CD4-positive, alpha-beta memory T cell (primary cell): ENCODE measurements at regions of chr6 and their contacts with region 1.

Region 1: DNA sequence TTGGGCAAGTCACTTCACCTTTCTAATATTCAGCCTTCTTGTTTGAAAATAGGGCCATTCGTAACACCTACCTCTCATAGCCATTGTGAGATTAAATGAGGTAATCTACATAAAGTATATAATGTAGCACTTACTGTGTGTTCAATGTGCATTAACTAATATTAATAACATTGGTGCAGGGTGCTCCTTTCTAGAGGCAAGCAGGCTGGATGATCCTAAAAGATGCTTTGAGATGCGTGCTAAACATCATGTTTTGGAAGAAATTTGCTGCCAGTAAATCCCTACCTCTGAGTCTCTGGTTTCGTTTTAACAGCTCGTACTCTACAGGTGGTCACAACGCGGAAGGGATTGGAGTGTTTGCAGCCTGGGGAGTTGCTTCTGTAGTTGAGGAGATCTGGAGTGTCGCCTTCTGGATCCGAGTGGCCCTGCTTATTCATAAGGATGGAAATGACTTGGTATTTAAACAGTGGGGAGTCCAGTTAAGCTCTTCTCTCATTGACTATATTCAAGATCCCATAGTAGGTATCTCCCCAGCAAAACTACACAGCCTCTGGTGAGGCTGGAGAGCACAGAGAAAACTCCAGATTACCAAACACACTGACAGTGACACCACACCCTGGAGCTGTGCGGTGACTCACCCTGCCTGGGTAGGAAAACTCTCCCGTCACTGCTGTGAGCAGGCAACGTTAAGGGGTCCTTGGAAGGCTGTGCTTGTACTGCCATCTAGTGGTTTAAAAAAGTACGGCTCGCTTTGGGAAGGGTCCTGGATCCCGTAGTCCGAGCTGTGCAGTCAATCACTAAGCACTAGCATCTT is 107.9 kb downstream of the MAP3K7 start:
- DNase-seq: peak; percentile 78 to 92 (median 82)
- H3K4me3 ChIP-seq: no peak overlapping the region
- H3K4me3 Mint-ChIP-seq: peak overlapping the region in 5 of 8 donors; percentile 29 to 78 (median 69)
- H3K27ac ChIP-seq: no peak overlapping the region
- H3K27ac Mint-ChIP-seq: peak overlapping the region; percentile 54 to 91 (median 88)
- H3K4me1 ChIP-seq: peaks cover 23% of the 10 kb centered on the region
- H3K4me1 Mint-ChIP-seq: peaks cover 12 to 41% (median 22%) of the 10 kb centered on the region in 4 donors
- H3K27me3 ChIP-seq: no peaks in the 10 kb centered on the region
- H3K27me3 Mint-ChIP-seq: no peaks in the 10 kb centered on the region

Region 2: GRCh38 chr6:89494131-89494796 is 984.7 kb before region 1 on chr6:
- CTCF ChIA-PET with region 1: no interaction called
- POLR2A ChIA-PET with region 1: no interaction called
- intact Hi-C with region 1: no loop called
- DNase-seq: no peak
- H3K4me3 ChIP-seq: no peak overlapping the region
- H3K4me3 Mint-ChIP-seq: no peak overlapping the region
- H3K27ac ChIP-seq: no peak overlapping the region
- H3K27ac Mint-ChIP-seq: no peak overlapping the region
- H3K4me1 ChIP-seq: no peaks in the 10 kb centered on the region
- H3K4me1 Mint-ChIP-seq: peaks cover 0 to 2% (median 0%) of the 10 kb centered on the region in 4 donors
- H3K27me3 ChIP-seq: no peaks in the 10 kb centered on the region
- H3K27me3 Mint-ChIP-seq: peaks cover 0 to 2% of the 10 kb centered on the region in 2 donors

Region 3: GRCh38 chr6:89940225-89941027 is 538.6 kb before region 1 on chr6:
- CTCF ChIA-PET with region 1: interaction called, 326 read pairs
- POLR2A ChIA-PET with region 1: interaction called, 19 read pairs
- intact Hi-C with region 1: loop called (anchors 1 kb)
- DNase-seq: peak; percentile 70 to 78 (median 71)
- H3K4me3 ChIP-seq: no peak overlapping the region
- H3K4me3 Mint-ChIP-seq: no peak overlapping the region
- H3K27ac ChIP-seq: no peak overlapping the region
- H3K27ac Mint-ChIP-seq: peak overlapping the region in 6 of 7 donors; percentile 5 to 67 (median 40)
- H3K4me1 ChIP-seq: peaks cover 7% of the 10 kb centered on the region
- H3K4me1 Mint-ChIP-seq: peaks cover 10 to 30% (median 17%) of the 10 kb centered on the region in 4 donors
- H3K27me3 ChIP-seq: no peaks in the 10 kb centered on the region
- H3K27me3 Mint-ChIP-seq: no peaks in the 10 kb centered on the region

Region 4: GRCh38 chr6:90080876-90081481 is 398.0 kb before region 1 on chr6:
- CTCF ChIA-PET with region 1: interaction called, 4 read pairs
- POLR2A ChIA-PET with region 1: interaction called, 3 read pairs
- intact Hi-C with region 1: loop called (anchors 2 kb)
- DNase-seq: peak; percentile 76 to 90 (median 84)
- H3K4me3 ChIP-seq: peak overlapping the region; percentile 24 to 54
- H3K4me3 Mint-ChIP-seq: peak overlapping the region; percentile 80 to 98 (median 96)
- H3K27ac ChIP-seq: peak overlapping the region; percentile 64
- H3K27ac Mint-ChIP-seq: peak overlapping the region; percentile 91 to 99 (median 98)
- H3K4me1 ChIP-seq: peaks cover 75% of the 10 kb centered on the region
- H3K4me1 Mint-ChIP-seq: peaks cover 64 to 94% (median 79%) of the 10 kb centered on the region in 4 donors
- H3K27me3 ChIP-seq: no peaks in the 10 kb centered on the region
- H3K27me3 Mint-ChIP-seq: no peaks in the 10 kb centered on the region

Region 5: DNA sequence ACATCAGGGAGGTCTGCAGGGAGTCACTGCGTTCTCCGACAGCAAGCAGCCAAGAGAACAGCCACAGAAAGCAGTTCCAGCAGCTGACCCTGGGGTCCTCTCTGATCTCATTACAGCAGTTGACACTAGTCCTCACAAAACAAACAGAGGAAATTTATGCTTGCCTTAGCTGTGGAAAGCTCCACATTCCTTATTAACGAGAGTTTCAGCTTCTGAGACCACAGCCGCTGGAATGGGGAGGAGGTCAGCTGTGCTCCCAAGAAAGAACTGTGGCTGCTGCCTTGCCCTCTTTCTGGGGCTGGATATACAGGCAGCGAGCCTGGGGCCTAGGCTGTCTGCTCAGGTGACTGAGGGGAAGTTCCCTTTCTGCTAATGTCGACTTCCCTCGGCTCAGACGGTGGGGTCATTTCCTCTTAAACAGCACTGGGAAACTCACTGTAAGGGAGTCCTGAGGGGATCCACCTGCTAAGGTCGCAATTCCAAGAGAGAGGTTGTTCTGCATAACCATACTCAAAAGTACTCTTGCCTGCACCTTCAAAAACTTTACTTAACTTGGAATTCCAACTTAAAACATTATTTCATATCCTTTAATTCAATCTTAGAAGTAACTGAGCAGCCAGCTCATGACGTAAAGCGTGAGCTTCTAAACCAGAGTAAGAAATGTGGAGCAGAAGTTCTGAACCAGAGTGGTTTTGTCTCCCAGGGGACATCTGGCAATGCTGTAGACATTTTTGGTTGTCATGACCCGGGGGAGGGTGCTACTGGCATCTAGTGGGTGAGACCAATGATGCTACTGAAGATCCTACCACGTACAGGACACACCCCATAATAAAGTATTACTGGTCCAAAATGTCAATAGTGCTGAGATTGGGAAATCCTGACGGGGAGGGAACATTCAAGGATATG is 262.7 kb before region 1 on chr6:
- CTCF ChIA-PET with region 1: interaction called, 15 read pairs
- POLR2A ChIA-PET with region 1: no interaction called
- intact Hi-C with region 1: loop called (anchors 1 kb)
- DNase-seq: peak in 4 of 5 donors; percentile 11 to 73 (median 31)
- H3K4me3 ChIP-seq: no peak overlapping the region
- H3K4me3 Mint-ChIP-seq: peak overlapping the region in 5 of 8 donors; percentile 6 to 61 (median 35)
- H3K27ac ChIP-seq: peak overlapping the region; percentile 43
- H3K27ac Mint-ChIP-seq: peak overlapping the region in 3 of 7 donors; percentile 84 to 89 (median 86)
- H3K4me1 ChIP-seq: peaks cover 59% of the 10 kb centered on the region
- H3K4me1 Mint-ChIP-seq: peaks cover 27 to 30% (median 28%) of the 10 kb centered on the region in 4 donors
- H3K27me3 ChIP-seq: no peaks in the 10 kb centered on the region
- H3K27me3 Mint-ChIP-seq: no peaks in the 10 kb centered on the region

Region 6: GRCh38 chr6:90296346-90297114 is 182.5 kb before region 1 on chr6 and contains the start of gene BACH2:
- CTCF ChIA-PET with region 1: interaction called, 20 read pairs
- POLR2A ChIA-PET with region 1: interaction called, 15 read pairs
- intact Hi-C with region 1: loop called (anchors 1 kb)
- DNase-seq: peak; percentile 90 to 96 (median 92)
- H3K4me3 ChIP-seq: peak within 1 kb of the TSS; percentile 43 to 81
- H3K4me3 Mint-ChIP-seq: peak within 1 kb of the TSS; percentile 90 to 96 (median 93)
- H3K27ac ChIP-seq: peak within 1 kb of the TSS; percentile 65
- H3K27ac Mint-ChIP-seq: peak within 1 kb of the TSS; percentile 92 to 99 (median 97)
- H3K4me1 ChIP-seq: peaks cover 40% of the 10 kb centered on the region
- H3K4me1 Mint-ChIP-seq: peaks cover 14 to 40% (median 24%) of the 10 kb centered on the region in 4 donors
- H3K27me3 ChIP-seq: no peaks in the 10 kb centered on the region
- H3K27me3 Mint-ChIP-seq: peaks cover 0 to 4% of the 10 kb centered on the region in 2 donors
- total RNA-seq, gene BACH2: 44.4 to 48.0 TPM

Region 7: GRCh38 chr6:90413867-90414266 is 65.1 kb before region 1 on chr6:
- CTCF ChIA-PET with region 1: interaction called, 16 read pairs
- POLR2A ChIA-PET with region 1: interaction called, 7 read pairs
- intact Hi-C with region 1: loop called (anchors 5 kb)
- DNase-seq: peak; percentile 80 to 91 (median 86)
- H3K4me3 ChIP-seq: peak overlapping the region; percentile 25 to 30
- H3K4me3 Mint-ChIP-seq: peak overlapping the region; percentile 79 to 93 (median 84)
- H3K27ac ChIP-seq: peak overlapping the region; percentile 34
- H3K27ac Mint-ChIP-seq: peak overlapping the region; percentile 88 to 100 (median 96)
- H3K4me1 ChIP-seq: peaks cover 38% of the 10 kb centered on the region
- H3K4me1 Mint-ChIP-seq: peaks cover 31 to 62% (median 44%) of the 10 kb centered on the region in 4 donors
- H3K27me3 ChIP-seq: no peaks in the 10 kb centered on the region
- H3K27me3 Mint-ChIP-seq: peaks cover 2% of the 10 kb centered on the region in 2 donors